Heart left ventricle (tissue), 16 donors: ENCODE measurements at regions of chrX and their contacts with region 1.

Region 1: GRCh38 chrX:23952984-23953907 is 45.4 kb downstream of the CXorf58 start:
- DNase-seq: no peak
- ATAC-seq: no peak
- H3K4me3 ChIP-seq: peak overlapping the region in 1 of 12 donors; percentile 6
- H3K27ac ChIP-seq: peak overlapping the region in 1 of 12 donors; percentile 40
- H3K4me1 ChIP-seq: peaks cover 0 to 8% (median 0%) of the 10 kb centered on the region in 12 donors
- H3K27me3 ChIP-seq: peaks cover 0 to 19% (median 0%) of the 10 kb centered on the region in 9 donors
- CTCF ChIP-seq: no peak
- POLR2A ChIP-seq: no peak

Region 2: GRCh38 chrX:23782863-23783568 is 170.2 kb before region 1 on chrX and contains the start of gene SAT1:
- intact Hi-C with region 1: no loop called
- DNase-seq: peak; percentile 95 to 98 (median 96)
- ATAC-seq: peak; percentile 93 to 98 (median 96)
- H3K4me3 ChIP-seq: peak within 1 kb of the TSS; percentile 41 to 97 (median 76)
- H3K27ac ChIP-seq: peak within 1 kb of the TSS; percentile 83 to 97 (median 92)
- H3K4me1 ChIP-seq: peaks cover 0 to 13% (median 0%) of the 10 kb centered on the region in 12 donors
- H3K27me3 ChIP-seq: no peaks in the 10 kb centered on the region
- CTCF ChIP-seq: peak; percentile 65 to 83 (median 76)
- POLR2A ChIP-seq: peak; percentile 87 to 98
- total RNA-seq, gene SAT1: 67.0 to 373 (median 154) TPM

Region 3: DNA sequence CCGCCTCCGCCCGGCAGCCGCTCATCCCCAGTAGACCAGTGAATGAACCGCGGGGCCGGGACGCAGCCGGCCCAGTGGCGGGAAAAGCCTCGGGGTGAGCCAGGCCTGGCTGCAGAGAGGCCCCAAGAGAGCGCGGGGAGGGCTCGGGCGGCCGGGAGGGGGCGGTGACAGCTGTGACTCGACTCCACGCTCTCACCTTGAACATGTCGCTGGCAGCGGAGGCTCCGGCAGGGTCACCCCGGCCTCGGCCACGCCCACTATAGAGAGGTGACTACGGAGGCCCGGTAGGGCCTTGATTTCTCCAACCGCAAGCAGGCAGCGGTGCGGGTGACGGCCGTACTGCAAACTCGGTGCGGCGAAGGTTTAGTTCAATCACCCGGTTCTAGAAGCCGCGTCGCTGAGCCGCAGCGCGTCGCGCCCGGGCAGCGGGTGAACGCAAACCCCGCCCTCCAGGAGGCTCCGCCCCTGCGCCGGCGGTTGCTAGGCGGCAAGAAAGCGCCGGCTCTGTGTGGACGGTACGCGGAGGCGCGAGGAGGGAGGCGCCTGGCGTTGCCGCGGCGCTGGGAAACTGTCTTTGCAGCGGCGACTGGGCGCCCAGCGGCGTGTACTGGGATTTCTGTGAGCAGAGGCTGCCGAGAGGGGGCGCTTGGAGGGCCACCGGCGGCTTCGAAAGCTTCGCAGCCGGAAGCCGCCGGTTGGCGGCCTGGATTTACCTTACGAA is 45.6 kb before region 1 on chrX and contains the starts of genes APOO and CXorf58:
- intact Hi-C with region 1: no loop called
- DNase-seq: peak; percentile 90 to 96 (median 92)
- ATAC-seq: peak; percentile 91 to 98 (median 96)
- H3K4me3 ChIP-seq: peak within 1 kb of the TSS; percentile 32 to 92 (median 68)
- H3K27ac ChIP-seq: peak within 1 kb of the TSS; percentile 80 to 96 (median 89)
- H3K4me1 ChIP-seq: peaks cover 0 to 16% (median 2%) of the 10 kb centered on the region in 12 donors
- H3K27me3 ChIP-seq: peaks cover 0 to 24% (median 0%) of the 10 kb centered on the region in 9 donors
- CTCF ChIP-seq: peak; percentile 66 to 90 (median 72)
- POLR2A ChIP-seq: peak in 1 of 2 donors; percentile 45
- total RNA-seq, gene APOO: 41.0 to 113 (median 92.2) TPM
- total RNA-seq, gene CXorf58: 0.16 to 0.30 (median 0.24) TPM in 4 of 9 donors, not detected in the others

Region 4: DNA sequence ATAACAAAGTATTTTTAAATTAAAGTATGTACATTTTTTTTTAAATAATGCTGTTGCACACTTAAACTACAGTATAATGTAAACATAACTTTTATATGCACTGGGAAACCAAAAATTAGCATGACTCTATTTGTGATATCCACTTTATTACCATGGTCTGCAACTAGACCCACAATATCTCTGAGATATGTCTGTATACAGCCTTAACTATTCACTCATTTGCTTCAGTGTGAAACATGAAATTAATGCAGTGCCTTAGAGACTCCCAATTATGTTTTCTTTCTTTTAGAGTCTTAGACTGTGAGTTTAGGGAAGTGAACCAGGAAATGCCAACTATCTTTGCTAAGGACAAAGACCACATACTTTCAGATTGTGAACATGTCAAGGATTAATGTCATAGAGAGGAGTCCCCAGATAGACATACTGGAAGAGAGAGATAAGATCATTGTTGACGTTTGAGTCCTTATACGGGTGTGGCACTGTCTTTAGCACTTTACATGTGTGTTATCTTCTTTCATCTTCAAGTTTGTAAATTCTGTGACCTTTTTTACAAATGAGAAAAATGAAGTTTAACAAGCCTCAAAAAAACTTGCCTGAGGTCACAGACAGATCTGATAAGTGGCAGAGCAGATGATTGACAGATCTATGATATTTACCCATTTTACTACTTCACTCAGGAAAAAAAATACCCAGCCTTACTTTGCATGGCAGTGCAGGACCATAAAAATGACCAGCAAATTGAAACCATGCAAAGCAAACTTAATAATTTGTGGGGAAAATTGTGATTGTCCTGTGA is 22.2 kb before region 1 on chrX:
- intact Hi-C with region 1: loop called in 1 of 10 experiments (anchors 2 kb)
- DNase-seq: no peak
- ATAC-seq: no peak
- H3K4me3 ChIP-seq: no peak overlapping the region
- H3K27ac ChIP-seq: peak overlapping the region in 1 of 12 donors; percentile 15
- H3K4me1 ChIP-seq: peaks cover 0 to 14% (median 0%) of the 10 kb centered on the region in 12 donors
- H3K27me3 ChIP-seq: peaks cover 0 to 33% (median 0%) of the 10 kb centered on the region in 9 donors
- CTCF ChIP-seq: no peak
- POLR2A ChIP-seq: no peak

Region 5: DNA sequence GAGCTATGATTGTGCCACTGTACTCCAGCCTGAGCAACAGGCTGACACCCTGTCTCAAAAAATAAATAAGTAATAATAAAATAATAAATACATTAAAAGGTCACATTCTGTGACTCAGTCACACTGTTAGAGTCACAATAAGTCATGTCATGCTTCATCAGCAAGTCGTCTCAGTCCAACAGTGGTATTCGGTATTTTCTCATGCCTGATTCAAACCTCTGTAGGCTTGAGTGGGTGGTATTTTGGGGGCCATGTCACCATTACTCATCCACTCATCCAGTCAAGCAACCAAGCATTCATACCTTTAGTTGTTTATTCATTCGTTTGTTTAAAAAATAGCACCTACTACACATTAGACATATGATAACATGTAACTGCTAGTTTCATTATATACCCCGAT is 313.8 kb after region 1 on chrX:
- intact Hi-C with region 1: no loop called
- DNase-seq: no peak
- ATAC-seq: no peak
- H3K4me3 ChIP-seq: no peak overlapping the region
- H3K27ac ChIP-seq: no peak overlapping the region
- H3K4me1 ChIP-seq: no peaks in the 10 kb centered on the region
- H3K27me3 ChIP-seq: peaks cover 0 to 35% (median 0%) of the 10 kb centered on the region in 9 donors
- CTCF ChIP-seq: no peak
- POLR2A ChIP-seq: no peak